Activated B cell treated with CpG ODN at 0.5 μM for 24 hours (primary cell): ENCODE measurements at regions of chr1 and their contacts with region 1.

Region 1: DNA sequence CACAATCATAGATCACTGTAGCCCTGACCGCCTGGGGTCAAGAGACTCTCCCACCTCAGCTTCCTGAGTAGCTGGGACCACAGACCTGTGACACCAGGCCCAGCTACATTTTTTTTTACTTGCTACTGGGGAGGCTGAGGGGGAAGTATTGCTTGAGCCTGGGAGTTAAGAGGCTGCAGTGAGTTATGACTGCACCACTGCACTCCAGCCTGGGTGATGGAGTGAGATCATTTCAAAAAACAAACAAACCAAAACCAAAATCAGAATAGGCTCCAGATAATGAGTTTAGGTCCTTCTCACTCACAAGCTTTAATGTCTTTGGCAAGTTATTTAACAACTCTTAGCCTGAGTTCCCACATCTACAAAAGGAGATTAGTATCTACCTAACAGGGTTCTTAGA is 22.8 kb downstream of the WDR26 start:
- DNase-seq: no peak
- ATAC-seq: no peak
- H3K4me3 Mint-ChIP-seq: no peak overlapping the region
- H3K27ac Mint-ChIP-seq: no peak overlapping the region
- H3K4me1 Mint-ChIP-seq: no peaks in the 10 kb centered on the region
- H3K27me3 Mint-ChIP-seq: no peaks in the 10 kb centered on the region
- CTCF ChIP-seq: no peak

Region 2: GRCh38 chr1:224399887-224400286 is 11.9 kb before region 1 on chr1:
- CTCF ChIA-PET with region 1: no interaction called
- POLR2A ChIA-PET with region 1: no interaction called
- intact Hi-C with region 1: loop called (anchors 2 kb)
- DNase-seq: no peak
- ATAC-seq: no peak
- H3K4me3 Mint-ChIP-seq: no peak overlapping the region
- H3K27ac Mint-ChIP-seq: no peak overlapping the region
- H3K4me1 Mint-ChIP-seq: no peaks in the 10 kb centered on the region
- H3K27me3 Mint-ChIP-seq: no peaks in the 10 kb centered on the region
- CTCF ChIP-seq: no peak